ENCODE measurements at regions of chr13 and their contacts with region 1.

Region 1: DNA sequence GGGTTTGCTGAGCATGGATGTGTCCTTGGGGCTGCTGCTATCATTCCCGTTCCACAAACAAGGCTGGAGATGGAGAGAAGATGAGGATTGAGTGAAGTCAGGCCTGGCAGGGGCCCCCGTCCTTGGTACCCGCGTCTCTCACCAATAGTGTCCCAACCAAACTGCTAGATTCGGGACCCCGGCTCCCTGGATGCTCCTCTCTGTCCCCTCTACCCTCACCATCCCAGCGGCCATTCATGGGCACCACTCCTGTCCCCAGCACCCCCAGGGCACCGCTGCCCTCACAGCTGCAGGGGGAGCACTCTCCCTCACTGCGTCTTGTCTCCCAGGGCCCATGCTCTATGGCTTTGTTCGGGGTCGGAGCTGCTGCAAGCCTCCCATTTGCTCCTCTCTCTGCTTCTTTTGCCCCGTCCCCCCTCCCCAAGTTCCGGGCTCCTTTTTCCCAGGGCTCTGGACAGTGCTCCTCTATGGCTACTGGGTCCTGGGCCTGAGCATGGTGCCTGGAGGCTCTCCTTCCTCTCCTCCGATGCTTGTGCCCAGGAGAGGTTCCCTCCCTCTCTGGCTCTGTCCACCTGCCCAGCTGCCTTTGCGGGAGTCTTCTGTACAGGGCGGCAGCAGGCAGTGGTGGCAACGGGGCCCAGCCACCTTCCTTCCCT is 219.5 kb downstream of the TEX29 start:
- DNase-seq: no peak

Region 2: DNA sequence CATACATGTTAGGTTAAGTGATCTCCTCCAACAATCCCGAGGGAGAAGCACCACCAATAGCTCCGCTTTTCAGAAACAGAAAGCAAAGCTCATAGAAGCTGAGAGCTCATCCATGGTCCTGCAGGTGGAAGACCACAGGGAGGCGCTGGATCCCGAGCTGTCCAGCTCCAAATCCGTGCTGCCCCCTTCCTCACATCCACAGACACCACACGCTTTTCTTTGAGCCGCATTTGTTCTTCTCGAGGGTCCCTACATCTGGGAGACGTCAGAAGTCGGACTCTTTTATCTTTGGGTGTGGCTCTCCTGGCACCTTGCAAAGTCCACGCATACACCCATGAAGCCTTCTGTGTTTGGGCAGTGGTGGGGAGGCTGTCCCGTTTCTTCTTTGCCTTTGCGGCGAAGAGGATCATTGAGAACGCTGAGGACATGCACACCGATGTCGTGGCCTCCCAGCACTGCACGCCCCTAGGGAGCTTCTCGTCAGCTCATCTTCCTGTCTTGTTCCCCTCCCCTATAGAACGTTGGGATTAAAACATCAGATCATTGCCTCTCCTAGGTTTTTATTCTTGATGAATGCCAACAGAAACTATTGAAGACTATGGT is 34.6 kb before region 1 on chr13:
- CTCF ChIA-PET with region 1: interaction called, 11 read pairs
- POLR2A ChIA-PET with region 1: no interaction called
- DNase-seq: peak; percentile 60

Region 3: DNA sequence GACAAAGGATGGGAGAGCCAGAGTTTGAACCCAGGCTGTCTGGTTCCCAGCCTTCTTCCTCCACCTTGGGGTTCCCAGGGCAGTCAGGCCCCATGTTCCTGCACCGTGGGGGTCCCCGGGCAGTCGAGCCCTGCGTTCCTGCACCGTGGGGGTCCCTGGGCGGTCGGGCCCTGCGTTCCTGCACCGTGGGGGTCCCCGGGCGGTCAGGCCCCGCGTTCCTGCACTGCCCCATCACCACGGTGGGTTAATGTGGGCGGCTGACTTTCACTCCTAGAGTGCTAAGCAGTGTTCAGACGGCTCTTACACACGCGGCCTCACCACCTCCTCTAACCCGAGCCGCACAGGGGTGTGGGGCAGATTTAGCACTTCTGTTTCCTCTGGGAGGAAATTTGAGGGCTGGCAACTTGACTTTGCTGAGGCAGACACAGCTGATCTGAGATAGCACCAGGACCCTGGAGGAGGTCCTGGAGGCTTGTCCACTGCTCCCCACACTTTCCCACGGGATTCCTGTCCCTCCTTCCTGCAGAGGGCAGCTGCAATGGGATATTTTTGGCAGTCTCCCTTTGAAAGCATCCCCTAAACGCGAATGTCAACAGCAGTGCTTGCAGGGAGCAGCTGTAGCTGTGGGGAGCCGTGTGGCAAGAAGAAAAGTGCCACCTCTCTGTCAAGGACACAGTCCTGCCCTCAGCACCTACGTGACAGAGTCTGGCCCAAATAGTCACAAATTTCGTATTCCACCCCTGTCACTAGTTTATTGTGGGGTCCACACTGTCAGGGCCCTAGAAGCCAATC is 19.9 kb after region 1 on chr13:
- CTCF ChIA-PET with region 1: no interaction called
- POLR2A ChIA-PET with region 1: no interaction called
- DNase-seq: no peak